Activated CD4-positive, alpha-beta T cell treated with anti-CD3 and anti-CD28 coated beads, Interleukin-2, amount 10 ng/mL, durations not matched to agents 24 days and 14 days (primary cell): ENCODE measurements at regions of chr6 and their contacts with region 1.

Region 1: GRCh38 chr6:99425647-99426453 is 742 bp upstream of the PNISR start:
- DNase-seq: peak; percentile 88
- H3K4me3 Mint-ChIP-seq: peak overlapping the region; percentile 89
- H3K27ac Mint-ChIP-seq: peak overlapping the region; percentile 98
- H3K4me1 Mint-ChIP-seq: peaks cover 45% of the 10 kb centered on the region
- H3K27me3 Mint-ChIP-seq: no peaks in the 10 kb centered on the region

Region 2: DNA sequence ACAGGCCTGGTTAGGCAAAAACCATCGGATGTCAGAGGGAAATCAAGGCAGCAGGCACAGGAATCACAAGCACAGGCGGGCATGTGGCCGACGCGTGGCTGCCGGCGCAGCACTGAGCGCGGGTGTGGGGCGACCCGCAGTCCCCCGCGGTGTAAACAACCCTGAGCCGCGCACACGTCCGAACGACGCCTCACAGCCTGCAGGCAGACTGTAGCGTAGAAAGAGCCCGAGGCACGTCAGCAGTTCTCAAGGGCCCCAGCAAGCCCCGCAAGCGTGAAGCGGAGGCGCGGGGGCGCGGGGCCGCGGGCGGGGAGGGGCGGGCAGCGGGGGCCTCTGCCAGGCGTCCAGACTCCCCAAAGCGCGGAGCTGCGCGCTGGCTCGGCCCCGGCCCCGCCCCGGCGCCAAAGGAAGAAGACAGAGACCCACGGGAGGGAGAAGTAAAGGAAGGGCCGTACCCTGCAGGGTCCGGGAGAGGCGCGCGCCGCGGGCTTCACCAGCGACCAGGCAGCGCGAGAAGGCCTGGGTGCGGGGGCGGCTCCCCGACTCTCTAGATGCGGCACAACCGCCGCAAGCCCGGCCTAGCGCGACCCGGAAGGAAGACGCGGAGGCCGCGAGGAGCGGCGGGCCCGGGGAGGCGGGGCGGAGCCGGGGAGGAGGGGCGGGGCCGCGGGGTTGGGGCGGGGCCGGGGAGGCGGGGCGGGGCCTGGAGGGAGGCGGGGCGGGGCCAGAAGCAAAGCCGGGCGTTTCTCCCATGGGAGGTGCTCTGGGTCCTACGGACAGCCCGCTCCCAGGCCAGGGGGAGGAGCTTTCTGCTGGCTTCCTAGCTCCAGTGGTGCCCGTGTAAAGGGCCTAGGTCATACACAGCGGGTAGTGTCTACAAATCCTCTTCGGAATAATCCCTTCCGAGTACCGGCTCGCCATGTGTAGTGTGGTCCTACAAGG is 478.2 kb before region 1 on chr6 and contains the start of gene FBXL4:
- intact Hi-C with region 1: loop called (anchors 2 kb)
- DNase-seq: peak; percentile 94
- H3K4me3 Mint-ChIP-seq: peak within 1 kb of the TSS; percentile 97
- H3K27ac Mint-ChIP-seq: peak within 1 kb of the TSS; percentile 98
- H3K4me1 Mint-ChIP-seq: peaks cover 32% of the 10 kb centered on the region
- H3K27me3 Mint-ChIP-seq: peaks cover 27% of the 10 kb centered on the region
- total RNA-seq, gene FBXL4: 12.8 and 15.3 TPM in 2 replicates

Region 3: DNA sequence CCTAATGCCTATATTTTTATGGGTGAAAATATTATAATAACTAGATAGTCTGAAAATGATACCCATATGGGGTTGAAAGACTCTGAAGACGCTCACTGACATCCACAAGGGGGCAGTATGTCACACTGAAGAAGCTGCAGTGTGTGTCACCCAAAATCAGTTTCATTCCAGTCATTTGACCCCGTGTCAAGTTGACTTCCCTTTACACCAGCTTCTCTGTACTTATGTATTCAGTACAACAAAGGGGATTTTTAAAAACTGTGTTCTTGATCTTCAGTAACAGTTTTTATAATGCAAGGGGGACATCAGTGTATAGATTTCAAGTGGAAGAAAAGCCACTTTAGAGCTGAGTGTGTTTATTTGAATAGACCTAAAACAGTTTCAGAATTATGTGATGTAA is 95.7 kb before region 1 on chr6:
- intact Hi-C with region 1: loop called (anchors 1 kb)
- DNase-seq: peak; percentile 87
- H3K4me3 Mint-ChIP-seq: no peak overlapping the region
- H3K27ac Mint-ChIP-seq: no peak overlapping the region
- H3K4me1 Mint-ChIP-seq: peaks cover 2% of the 10 kb centered on the region
- H3K27me3 Mint-ChIP-seq: peaks cover 10% of the 10 kb centered on the region

Region 4: GRCh38 chr6:99393698-99394531 is 31.9 kb before region 1 on chr6 and contains the start of gene COQ3:
- intact Hi-C with region 1: loop called (anchors 1 kb)
- DNase-seq: peak; percentile 91
- H3K4me3 Mint-ChIP-seq: peak within 1 kb of the TSS; percentile 96
- H3K27ac Mint-ChIP-seq: peak within 1 kb of the TSS; percentile 91
- H3K4me1 Mint-ChIP-seq: peaks cover 15% of the 10 kb centered on the region
- H3K27me3 Mint-ChIP-seq: no peaks in the 10 kb centered on the region
- total RNA-seq, gene COQ3: 13.4 and 14.4 TPM in 2 replicates

Region 5: GRCh38 chr6:99412065-99412464 is 13.8 kb before region 1 on chr6:
- intact Hi-C with region 1: no loop called
- DNase-seq: no peak
- H3K4me3 Mint-ChIP-seq: no peak overlapping the region
- H3K27ac Mint-ChIP-seq: peak overlapping the region; percentile 68
- H3K4me1 Mint-ChIP-seq: peaks cover 14% of the 10 kb centered on the region
- H3K27me3 Mint-ChIP-seq: no peaks in the 10 kb centered on the region

Region 6: DNA sequence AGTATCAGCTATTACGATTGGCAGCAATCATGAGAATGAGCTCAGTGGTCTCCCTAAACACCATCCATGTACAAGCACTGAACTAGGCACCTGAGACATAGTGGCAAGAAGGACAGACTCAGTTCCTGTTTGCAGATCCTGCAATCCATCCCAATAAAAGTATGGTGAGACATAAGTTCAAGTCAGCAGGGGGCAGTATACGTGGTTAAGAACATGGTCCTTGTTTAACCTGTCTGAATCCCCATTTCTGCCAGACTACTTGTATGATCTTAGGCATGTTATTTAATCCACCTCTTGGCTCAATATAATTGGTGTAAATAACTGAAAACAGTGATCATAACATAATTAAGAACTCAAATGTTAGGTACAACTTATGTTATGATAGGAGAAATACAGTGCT is 32.5 kb after region 1 on chr6:
- intact Hi-C with region 1: no loop called
- DNase-seq: no peak
- H3K4me3 Mint-ChIP-seq: no peak overlapping the region
- H3K27ac Mint-ChIP-seq: no peak overlapping the region
- H3K4me1 Mint-ChIP-seq: no peaks in the 10 kb centered on the region
- H3K27me3 Mint-ChIP-seq: no peaks in the 10 kb centered on the region

Region 7: DNA sequence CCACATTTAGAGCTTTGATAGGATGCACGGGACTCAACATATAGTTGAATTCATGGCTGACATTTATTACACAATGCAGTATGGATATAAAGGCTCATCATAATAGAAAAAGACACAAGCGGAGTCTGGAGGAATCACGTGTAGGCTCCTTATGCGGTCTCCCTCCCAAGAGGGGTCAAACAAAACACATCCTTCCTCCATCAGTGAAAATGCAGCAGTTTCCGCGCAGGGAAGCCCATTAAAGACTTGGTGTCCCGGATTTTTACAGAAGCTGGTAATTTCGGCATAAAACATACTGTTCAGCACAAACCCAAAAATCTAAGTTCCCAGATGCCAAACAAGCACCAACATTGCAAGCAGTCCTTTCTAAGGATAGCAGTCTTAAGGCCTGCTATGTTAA is 88.2 kb after region 1 on chr6:
- intact Hi-C with region 1: loop called (anchors 1 kb)
- DNase-seq: no peak
- H3K4me3 Mint-ChIP-seq: peak overlapping the region; percentile 95
- H3K27ac Mint-ChIP-seq: peak overlapping the region; percentile 28
- H3K4me1 Mint-ChIP-seq: peaks cover 31% of the 10 kb centered on the region
- H3K27me3 Mint-ChIP-seq: peaks cover 9% of the 10 kb centered on the region

Region 8: GRCh38 chr6:99520855-99521632 is 95.2 kb after region 1 on chr6:
- intact Hi-C with region 1: loop called (anchors 1 kb)
- DNase-seq: peak; percentile 93
- H3K4me3 Mint-ChIP-seq: peak overlapping the region; percentile 99
- H3K27ac Mint-ChIP-seq: peak overlapping the region; percentile 99
- H3K4me1 Mint-ChIP-seq: peaks cover 18% of the 10 kb centered on the region
- H3K27me3 Mint-ChIP-seq: peaks cover 11% of the 10 kb centered on the region